AG04449 (cell line): ENCODE measurements at regions of chr15 and their contacts with region 1.

Region 1: DNA sequence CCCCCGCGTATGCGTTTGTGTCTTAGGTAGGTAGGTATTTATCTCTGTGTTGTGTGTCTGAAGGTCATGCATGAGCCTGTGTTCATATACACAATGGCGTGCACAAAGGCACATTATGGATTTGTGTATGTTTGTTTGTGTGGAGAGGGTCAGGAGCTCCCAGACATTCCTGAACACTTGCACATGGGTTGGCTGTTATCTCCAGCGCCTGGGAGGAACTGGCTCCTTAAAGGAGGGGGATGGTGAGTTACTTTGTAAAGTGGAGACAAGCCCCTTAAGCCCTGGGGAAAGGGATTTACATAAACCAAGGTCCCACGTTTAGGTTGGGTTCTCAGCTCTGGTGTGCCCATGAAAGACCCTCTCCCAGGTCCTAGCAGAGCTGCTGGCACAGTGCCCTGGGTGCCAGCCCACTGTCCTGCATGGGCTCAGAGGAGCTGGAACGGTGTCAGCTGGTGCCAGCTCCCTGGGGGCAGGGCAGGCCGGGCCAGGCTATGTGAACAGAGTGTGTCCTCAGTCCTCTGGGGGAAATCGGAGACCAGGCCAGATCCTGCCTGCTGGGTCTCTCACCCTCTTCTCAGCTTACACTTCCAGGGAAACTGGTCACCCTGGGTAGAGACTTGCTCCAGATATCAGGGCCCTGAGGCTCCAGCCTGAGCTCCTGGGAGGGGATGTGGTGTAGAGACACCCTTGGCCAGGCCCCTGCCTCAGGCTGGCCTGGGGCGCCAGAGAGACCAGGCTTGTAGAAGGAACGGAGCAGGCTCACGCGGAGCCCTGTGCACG is 25.1 kb downstream of the SNX33 start:
- DNase-seq: peak; percentile 80
- H3K4me3 ChIP-seq: no peak overlapping the region; the same call in none of the 2 replicates
- CTCF ChIP-seq: no peak

Region 2: GRCh38 chr15:75639709-75640482 is 32.9 kb before region 1 on chr15 and contains the start of gene IMP3:
- CTCF ChIA-PET with region 1: interaction called, 16 read pairs
- POLR2A ChIA-PET with region 1: interaction called, 6 read pairs
- DNase-seq: no peak
- H3K4me3 ChIP-seq: peak within 1 kb of the TSS; percentile 99
- CTCF ChIP-seq: no peak

Region 3: GRCh38 chr15:75647370-75648155 is 25.3 kb before region 1 on chr15 and contains the start of gene SNX33:
- CTCF ChIA-PET with region 1: interaction called, 15 read pairs
- POLR2A ChIA-PET with region 1: interaction called, 23 read pairs
- DNase-seq: no peak
- H3K4me3 ChIP-seq: peak within 1 kb of the TSS; percentile 87
- CTCF ChIP-seq: peak; percentile 66

Region 4: DNA sequence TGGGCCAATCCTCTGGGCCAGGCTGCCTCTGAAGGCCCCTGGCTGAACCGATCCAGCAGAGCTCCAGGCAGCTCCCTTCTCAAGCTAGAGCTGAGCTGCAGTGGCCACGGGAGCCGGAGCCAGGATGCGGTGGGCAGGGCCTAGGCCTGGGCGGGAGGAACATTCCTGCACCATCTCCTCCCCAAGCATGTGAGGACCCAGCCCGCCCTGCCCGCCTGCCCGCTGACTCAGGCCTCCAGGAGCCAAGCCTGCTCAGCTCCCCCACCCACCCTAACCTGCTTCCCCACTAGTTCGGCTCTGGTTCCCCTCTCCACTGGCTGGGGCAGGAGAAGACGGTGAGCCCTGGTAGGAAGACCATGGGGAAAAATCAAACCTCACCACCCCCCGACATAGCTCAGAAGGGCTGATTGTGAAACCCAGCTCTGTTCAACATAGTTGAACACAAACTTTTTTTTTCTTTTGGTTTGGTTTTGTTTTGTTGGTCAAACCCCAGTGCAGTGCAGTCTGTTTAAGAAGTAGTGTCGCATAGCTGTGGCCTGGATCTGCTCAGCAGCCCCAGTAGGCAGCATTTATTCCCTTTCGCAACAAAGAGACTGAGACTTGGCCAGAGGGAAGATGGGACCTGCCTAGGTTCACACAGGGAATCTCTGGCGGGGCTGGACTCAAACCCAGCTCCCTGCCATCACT is 11.6 kb before region 1 on chr15:
- CTCF ChIA-PET with region 1: interaction called, 10 read pairs
- POLR2A ChIA-PET with region 1: interaction called, 17 read pairs
- DNase-seq: peak; percentile 83
- H3K4me3 ChIP-seq: peak overlapping the region; percentile 23
- CTCF ChIP-seq: no peak